ENCODE measurements at regions of chr13 and their contacts with region 1.

Region 1: GRCh38 chr13:30504081-30504480 is 38.3 kb upstream of the HMGB1 start:
- DNase-seq: no peak
- H3K4me3 ChIP-seq: no peak overlapping the region
- H3K27ac ChIP-seq: no peak overlapping the region
- H3K4me1 ChIP-seq: no peaks in the 10 kb centered on the region
- H3K27me3 ChIP-seq: no peaks in the 10 kb centered on the region
- CTCF ChIP-seq: no peak

Region 2: DNA sequence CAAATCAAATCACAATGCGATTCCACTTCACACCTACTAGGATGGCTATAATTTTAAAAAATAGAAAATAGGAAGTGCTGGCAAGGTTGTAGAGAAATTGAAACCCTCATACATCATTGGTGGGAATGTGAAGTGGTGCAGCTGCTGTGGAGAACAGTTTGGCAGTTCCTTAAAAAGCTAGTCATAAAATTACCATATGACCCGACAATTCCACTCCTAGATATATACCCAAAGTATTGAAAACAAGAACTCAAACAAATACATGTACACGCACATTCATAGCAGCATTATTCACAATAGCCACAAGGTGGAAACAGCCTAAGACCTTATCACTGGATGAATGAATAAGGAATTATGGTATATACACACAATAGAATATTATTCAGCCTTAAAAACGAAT is 50.4 kb before region 1 on chr13:
- CTCF ChIA-PET with region 1: no interaction called
- POLR2A ChIA-PET with region 1: no interaction called
- intact Hi-C with region 1: no loop called
- DNase-seq: peak in 1 of 2 experiments; percentile 46
- H3K4me3 ChIP-seq: no peak overlapping the region
- H3K27ac ChIP-seq: no peak overlapping the region
- H3K4me1 ChIP-seq: no peaks in the 10 kb centered on the region
- H3K27me3 ChIP-seq: no peaks in the 10 kb centered on the region
- CTCF ChIP-seq: peak; percentile 47; the same call in 1 of the 2 replicates

Region 3: DNA sequence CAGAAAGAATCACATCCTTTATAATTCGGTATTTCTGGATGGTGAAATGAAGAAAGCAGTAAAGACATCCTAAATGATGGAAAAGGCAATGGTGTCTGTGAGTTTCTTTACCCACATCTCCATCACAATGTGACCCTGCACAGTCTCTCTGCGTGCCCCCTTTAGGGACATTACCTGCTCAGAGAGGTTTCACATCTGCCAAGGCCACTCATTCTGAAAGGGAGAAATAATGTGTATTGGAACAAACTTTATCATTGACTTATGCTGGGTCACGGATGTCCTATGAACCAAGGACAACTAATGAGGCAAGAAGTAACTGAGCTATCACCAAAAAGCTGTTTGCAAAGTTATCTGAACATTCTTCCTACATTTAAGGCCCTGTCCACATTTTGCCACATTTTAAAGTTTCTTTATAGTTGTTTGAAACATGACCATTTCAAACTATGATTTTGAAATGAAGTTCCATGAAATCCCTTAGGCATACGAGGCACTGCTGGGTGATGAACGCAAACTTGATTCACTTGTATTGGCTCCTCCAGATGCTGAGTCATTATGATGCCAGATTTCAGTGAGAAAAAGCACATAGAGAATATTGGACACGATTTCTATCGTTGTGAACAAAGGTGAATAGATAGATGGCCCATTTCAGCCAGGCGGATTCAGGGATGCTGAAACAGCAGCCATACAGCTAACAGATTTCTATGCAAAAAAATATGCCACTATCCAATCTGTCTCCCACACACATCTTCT is 25.2 kb after region 1 on chr13:
- CTCF ChIA-PET with region 1: no interaction called
- POLR2A ChIA-PET with region 1: no interaction called
- intact Hi-C with region 1: no loop called
- DNase-seq: no peak
- H3K4me3 ChIP-seq: no peak overlapping the region
- H3K27ac ChIP-seq: no peak overlapping the region
- H3K4me1 ChIP-seq: no peaks in the 10 kb centered on the region
- H3K27me3 ChIP-seq: no peaks in the 10 kb centered on the region
- CTCF ChIP-seq: no peak

Region 4: DNA sequence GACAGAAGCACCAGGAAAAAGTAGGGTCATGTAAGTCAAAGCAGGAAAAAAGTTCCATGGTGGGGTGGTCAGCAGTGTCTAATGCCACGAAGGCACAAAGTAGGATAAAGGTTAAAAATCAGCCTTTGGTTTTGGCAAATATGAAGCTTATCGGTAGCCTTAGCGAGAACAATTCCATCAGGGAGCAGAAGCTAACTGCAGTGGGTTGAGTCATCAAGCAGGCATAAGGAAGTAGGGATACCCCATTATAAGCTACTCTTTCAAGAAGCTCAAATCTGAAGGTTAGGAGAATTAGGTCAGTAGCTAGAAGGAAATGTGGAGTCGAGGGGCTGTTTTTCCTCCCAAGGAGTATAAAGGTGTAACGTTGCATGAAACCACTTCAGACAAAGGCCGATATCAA is 56.1 kb after region 1 on chr13:
- CTCF ChIA-PET with region 1: no interaction called
- POLR2A ChIA-PET with region 1: interaction called, 11 read pairs
- intact Hi-C with region 1: no loop called
- DNase-seq: no peak
- H3K4me3 ChIP-seq: no peak overlapping the region
- H3K27ac ChIP-seq: no peak overlapping the region
- H3K4me1 ChIP-seq: no peaks in the 10 kb centered on the region
- H3K27me3 ChIP-seq: no peaks in the 10 kb centered on the region
- CTCF ChIP-seq: no peak

Region 5: DNA sequence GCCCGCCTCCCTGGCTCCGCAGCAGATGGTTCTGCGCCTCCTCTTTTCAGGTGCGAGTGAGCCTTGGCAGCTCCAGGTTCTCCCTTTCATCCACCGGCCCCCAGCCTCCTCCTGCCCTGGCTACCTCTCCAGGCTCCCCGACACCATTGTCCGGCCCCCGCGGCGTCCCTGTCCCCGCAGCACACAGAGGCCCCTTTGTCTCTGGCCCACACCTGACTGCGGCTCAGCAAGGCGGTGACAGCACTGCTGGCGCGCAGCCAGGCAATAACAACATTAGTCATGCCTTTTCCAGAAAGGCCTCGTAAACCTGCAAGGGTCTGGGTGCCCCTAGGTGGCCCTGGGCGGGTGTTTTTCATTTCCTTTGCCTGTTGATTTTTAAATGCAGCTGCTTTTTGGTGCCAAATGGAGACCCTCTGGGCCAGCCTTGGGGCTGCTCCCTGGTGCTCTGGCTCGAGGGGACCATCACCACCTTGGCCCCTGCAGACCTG is 328.8 kb after region 1 on chr13:
- CTCF ChIA-PET with region 1: no interaction called
- POLR2A ChIA-PET with region 1: no interaction called
- intact Hi-C with region 1: no loop called
- DNase-seq: peak; percentile 80 to 86
- H3K4me3 ChIP-seq: peak overlapping the region; percentile 3; the same call in 1 of the 2 replicates
- H3K27ac ChIP-seq: 0 out of 2 replicates have a peak overlapping the region, but pooled peaks have one; percentile 39
- H3K4me1 ChIP-seq: peaks cover 64% of the 10 kb centered on the region
- H3K27me3 ChIP-seq: no peaks in the 10 kb centered on the region
- CTCF ChIP-seq: no peak

Measured in PC-9 (cell line).